Panc1 (cell line): ENCODE measurements at regions of chr3 and their contacts with region 1.

Region 1: DNA sequence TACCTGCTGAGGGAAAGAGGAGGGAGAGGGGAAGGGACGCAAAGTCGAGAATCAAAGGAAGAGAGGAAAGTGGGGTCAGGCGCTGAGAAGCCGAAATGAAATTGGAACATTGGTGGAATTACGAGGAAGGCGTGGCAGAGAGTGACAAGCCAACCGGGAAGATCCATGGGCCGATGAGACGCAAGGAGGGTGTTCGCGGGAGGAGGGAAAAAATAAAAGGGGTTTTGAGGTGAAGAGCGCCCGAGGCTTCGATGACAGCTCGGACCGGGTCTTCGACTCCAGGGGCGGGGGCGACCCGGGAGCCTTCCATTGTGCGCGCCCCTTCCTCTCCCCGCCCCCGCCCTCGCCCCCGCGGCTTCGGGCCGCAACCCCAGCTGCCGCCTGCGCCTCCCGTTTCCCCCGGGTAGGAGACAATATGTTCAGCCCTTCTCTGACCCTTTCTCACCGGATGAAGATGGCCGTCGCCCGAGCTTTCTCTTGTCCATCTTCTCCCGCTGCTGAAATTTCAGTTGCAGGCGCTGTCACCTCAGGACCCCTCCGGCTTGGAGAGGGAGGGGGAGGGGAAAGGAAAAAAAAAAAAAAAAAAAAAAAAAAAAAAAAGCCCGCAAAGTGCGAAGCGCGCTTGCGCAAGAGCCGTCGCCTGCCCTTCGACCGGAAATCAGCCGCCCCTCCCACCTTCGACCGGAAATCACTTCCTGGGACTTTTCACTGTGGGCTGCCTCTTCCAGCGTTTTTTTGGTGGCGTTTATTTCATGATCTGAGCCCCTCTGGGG is at the start of gene SENP7:
- DNase-seq: peak; percentile 75
- ATAC-seq: peak; percentile 91
- H3K4me3 ChIP-seq: peak within 1 kb of the TSS; percentile 84 to 89
- H3K27ac ChIP-seq: peak within 1 kb of the TSS; percentile 99
- H3K4me1 ChIP-seq: peaks cover 28% of the 10 kb centered on the region
- H3K27me3 ChIP-seq: no peaks in the 10 kb centered on the region
- CTCF ChIP-seq: no peak
- total RNA-seq, gene SENP7: 10.1 TPM

Region 2: DNA sequence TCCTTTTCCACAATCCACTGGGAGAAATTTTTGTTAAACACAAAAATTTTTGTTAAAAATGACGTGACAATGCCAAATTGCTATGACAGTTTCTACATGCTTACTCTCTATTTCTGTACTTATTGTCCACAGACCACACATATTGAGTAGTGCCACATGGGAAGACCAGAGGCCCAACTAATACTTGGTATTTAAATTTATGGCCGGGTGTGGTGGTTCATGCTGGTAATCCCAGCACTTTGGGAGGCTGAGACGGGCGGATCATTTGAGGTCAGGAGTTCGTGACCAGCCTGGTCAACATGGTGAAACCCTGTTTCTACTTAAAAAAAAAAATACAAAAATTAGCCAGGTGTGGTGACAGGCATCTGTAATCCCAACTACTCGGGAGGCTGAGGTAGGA is 143.8 kb after region 1 on chr3:
- CTCF ChIA-PET with region 1: no interaction called
- POLR2A ChIA-PET with region 1: interaction called, 19 read pairs
- in situ Hi-C with region 1: no loop called
- intact Hi-C with region 1: no loop called
- DNase-seq: no peak
- ATAC-seq: no peak
- H3K4me3 ChIP-seq: no peak overlapping the region
- H3K27ac ChIP-seq: no peak overlapping the region
- H3K4me1 ChIP-seq: no peaks in the 10 kb centered on the region
- H3K27me3 ChIP-seq: no peaks in the 10 kb centered on the region
- CTCF ChIP-seq: no peak

Region 3: GRCh38 chr3:102078854-102079253 is 566.0 kb after region 1 on chr3:
- CTCF ChIA-PET with region 1: no interaction called
- POLR2A ChIA-PET with region 1: no interaction called
- in situ Hi-C with region 1: no loop called
- intact Hi-C with region 1: no loop called
- DNase-seq: no peak
- ATAC-seq: no peak
- H3K4me3 ChIP-seq: no peak overlapping the region
- H3K27ac ChIP-seq: no peak overlapping the region
- H3K4me1 ChIP-seq: no peaks in the 10 kb centered on the region
- H3K27me3 ChIP-seq: no peaks in the 10 kb centered on the region
- CTCF ChIP-seq: no peak